GM13977 (cell line): ENCODE measurements at regions of chr19 and their contacts with region 1.

Region 1: DNA sequence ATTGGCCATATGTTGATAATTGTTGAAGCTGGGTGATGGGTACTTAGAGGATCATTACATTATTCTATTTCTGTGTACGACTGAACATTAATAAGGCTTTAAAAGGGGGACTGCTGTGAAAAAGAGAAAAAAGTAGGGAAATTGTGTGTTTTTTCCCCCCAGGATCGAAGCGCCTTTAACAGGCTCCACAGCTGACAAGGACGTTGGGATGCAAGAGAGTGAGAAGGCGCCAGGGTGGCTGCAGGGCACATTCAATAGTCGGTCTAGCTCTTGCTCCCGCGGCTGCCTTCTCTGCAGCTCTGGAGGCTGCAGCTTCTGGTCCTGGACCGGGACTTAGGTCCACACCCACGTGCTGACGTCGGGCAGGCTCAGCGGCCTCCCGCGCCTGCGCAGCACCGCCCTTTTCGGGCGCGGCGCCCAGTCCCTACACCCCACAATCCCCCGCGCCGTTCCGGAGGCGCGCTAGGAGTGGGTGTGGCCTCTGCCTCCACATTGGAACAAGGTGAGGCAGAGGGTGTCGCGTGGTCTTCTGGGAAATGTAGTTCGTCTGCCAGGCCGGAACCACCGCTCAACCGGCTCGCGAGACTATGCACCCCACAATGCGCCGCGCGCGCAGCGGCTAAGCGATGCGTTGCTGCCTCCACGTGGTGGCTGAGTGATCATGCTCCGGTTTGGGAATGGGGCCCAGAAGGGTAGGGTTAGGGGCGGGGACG is 4.9 kb upstream of the LRFN3 start:
- DNase-seq: peak; percentile 99
- CTCF ChIP-seq: peak; percentile 98

Region 2: DNA sequence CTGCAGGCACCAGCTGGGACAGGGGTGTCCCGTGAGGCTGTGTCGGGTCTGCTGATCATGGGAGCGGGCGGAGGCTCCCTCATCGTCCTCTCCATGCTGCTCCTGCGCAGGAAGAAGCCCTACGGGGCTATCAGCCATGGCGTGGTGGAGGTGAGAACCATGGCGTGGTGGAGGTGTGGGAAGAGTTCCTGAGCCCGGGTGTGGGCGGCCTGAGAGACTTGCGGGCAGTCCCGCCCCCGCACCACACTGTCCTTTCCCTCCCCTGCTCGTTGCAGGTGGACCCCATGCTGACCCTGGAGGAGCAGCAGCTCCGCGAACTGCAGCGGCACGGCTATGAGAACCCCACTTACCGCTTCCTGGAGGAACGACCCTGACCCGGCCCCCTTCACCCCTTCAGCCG is 52.2 kb before region 1 on chr19:
- in situ Hi-C with region 1: no loop called
- DNase-seq: no peak
- CTCF ChIP-seq: no peak

Region 3: GRCh38 chr19:35889370-35890112 is 41.8 kb before region 1 on chr19:
- in situ Hi-C with region 1: loop called (anchors 5 kb)
- DNase-seq: no peak
- CTCF ChIP-seq: no peak

Region 4: GRCh38 chr19:36225219-36225892 is 294.0 kb after region 1 on chr19:
- in situ Hi-C with region 1: no loop called
- DNase-seq: no peak
- CTCF ChIP-seq: no peak